ENCODE measurements at regions of chr19 and their contacts with region 1.

Region 1: GRCh38 chr19:18203863-18204393 is at the start of gene RAB3A:
- DNase-seq: peak; percentile 100
- ATAC-seq: peak; percentile 92
- H3K4me3 ChIP-seq: peak within 1 kb of the TSS; percentile 90
- H3K27ac ChIP-seq: peak within 1 kb of the TSS; percentile 10
- H3K4me1 ChIP-seq: peaks cover 16% of the 10 kb centered on the region
- H3K27me3 ChIP-seq: no peaks in the 10 kb centered on the region
- CTCF ChIP-seq: no peak
- total RNA-seq, gene RAB3A: 5.7 and 6.7 TPM in 2 replicates

Region 2: DNA sequence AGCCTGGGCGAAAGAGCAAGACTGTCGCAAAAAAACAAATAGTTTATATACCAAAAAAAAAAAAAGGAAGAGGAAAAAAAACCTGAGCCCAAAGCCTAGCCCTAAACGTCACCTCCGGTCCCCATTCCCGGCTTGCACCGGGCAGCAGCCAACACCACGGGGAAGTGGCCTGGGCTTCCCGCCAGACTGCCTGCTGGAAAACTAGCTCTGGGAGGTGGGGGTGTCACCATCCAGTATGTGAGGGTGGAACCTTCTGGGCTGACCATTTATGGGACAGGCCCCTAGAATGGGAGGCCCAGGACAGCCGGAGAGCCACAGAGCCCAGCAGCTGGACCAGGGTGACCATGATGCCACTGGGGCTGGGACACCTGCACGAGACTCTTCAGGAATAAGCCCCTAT is 154.5 kb before region 1 on chr19:
- CTCF ChIA-PET with region 1: no interaction called
- POLR2A ChIA-PET with region 1: interaction called, 27 read pairs
- intact Hi-C with region 1: no loop called
- DNase-seq: no peak
- ATAC-seq: no peak
- H3K4me3 ChIP-seq: no peak overlapping the region
- H3K27ac ChIP-seq: no peak overlapping the region
- H3K4me1 ChIP-seq: peaks cover 31% of the 10 kb centered on the region
- H3K27me3 ChIP-seq: no peaks in the 10 kb centered on the region
- CTCF ChIP-seq: no peak

Region 3: DNA sequence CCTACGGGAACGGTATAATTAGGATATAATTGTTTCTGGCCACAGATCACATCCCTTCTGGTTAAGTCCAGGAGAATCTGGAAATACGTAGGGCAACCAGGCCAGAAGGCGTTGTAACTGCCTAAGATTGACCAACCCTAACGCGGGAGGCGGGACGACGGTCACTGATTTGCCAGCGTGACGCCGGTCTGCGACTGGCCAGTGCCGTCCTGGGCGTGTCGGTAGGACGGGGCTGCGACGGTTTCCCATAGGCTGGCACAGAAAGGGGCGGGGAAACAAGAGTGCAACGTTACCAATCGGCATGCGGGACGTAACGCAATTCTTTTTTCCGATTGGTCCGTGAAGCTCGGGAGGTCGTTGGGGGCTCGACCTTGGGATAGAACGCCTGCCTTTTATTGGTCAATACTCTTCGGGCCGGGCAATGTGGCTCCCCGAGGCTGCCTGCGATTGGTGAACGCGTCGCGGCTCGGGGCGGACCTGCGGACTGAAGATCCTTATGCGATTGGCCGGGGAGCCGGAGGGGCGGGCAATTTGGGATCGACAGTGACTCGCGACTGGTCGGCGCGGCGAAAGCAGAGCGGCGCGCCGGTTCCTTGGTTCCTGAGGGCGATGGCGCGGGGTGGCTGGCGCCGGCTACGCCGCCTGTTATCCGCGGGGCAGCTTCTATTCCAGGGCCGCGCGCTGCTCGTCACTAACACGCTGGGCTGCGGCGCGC is 11.1 kb before region 1 on chr19 and contains the start of gene MPV17L2:
- CTCF ChIA-PET with region 1: interaction called, 4 read pairs
- POLR2A ChIA-PET with region 1: no interaction called
- intact Hi-C with region 1: loop called (anchors 1 kb)
- DNase-seq: peak; percentile 99
- ATAC-seq: peak; percentile 90
- H3K4me3 ChIP-seq: peak within 1 kb of the TSS; percentile 85
- H3K27ac ChIP-seq: peak within 1 kb of the TSS; percentile 26
- H3K4me1 ChIP-seq: peaks cover 13% of the 10 kb centered on the region
- H3K27me3 ChIP-seq: no peaks in the 10 kb centered on the region
- CTCF ChIP-seq: no peak
- total RNA-seq, gene MPV17L2: 34.2 and 44.7 TPM in 2 replicates

Region 4: DNA sequence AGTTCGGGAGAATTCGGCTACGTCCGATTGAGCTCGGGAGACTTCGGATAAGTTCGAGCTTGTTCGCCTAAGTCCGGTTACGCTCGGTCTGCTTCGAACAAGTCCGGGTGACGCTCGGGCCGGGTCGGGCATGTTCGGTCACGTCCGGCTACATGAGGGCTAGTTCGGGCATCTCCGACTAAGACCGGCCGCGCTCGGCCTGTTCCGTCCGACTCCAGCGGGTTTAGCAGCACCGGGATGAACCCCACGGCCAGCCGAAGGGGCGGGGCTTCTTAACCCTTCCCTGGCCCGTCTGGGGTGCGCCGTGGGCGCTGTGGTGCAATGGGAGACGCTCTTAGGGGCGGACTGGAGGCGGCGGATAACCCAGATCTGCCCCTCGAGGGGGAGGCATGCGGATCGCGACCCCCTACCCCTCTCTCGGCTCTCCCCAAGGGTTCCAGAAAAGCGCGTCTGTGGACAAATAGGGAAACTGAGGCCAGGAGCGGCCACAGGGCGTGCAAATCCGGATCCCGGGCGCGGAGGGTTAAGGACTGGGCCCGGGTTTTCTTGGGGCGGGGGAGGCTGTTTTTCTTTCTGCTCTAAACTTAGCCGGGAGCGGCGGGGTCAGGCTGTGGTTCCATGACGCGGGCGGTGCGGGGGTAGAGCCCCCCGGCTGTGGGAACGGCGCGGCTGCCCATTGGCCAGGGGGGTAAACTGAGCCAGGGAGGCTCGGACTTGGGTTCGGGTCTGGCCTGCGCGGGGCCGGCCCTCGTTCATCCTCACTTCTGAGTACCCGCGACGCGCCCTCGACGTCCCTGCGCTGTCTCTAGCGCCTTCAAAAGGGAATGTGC is 20.8 kb after region 1 on chr19:
- CTCF ChIA-PET with region 1: interaction called, 14 read pairs
- POLR2A ChIA-PET with region 1: no interaction called
- intact Hi-C with region 1: no loop called
- DNase-seq: peak; percentile 99
- ATAC-seq: peak; percentile 100
- H3K4me3 ChIP-seq: peak overlapping the region; percentile 61
- H3K27ac ChIP-seq: no peak overlapping the region
- H3K4me1 ChIP-seq: peaks cover 8% of the 10 kb centered on the region; the same call in 1 of the 2 replicates
- H3K27me3 ChIP-seq: peaks cover 9% of the 10 kb centered on the region
- CTCF ChIP-seq: no peak

Region 5: DNA sequence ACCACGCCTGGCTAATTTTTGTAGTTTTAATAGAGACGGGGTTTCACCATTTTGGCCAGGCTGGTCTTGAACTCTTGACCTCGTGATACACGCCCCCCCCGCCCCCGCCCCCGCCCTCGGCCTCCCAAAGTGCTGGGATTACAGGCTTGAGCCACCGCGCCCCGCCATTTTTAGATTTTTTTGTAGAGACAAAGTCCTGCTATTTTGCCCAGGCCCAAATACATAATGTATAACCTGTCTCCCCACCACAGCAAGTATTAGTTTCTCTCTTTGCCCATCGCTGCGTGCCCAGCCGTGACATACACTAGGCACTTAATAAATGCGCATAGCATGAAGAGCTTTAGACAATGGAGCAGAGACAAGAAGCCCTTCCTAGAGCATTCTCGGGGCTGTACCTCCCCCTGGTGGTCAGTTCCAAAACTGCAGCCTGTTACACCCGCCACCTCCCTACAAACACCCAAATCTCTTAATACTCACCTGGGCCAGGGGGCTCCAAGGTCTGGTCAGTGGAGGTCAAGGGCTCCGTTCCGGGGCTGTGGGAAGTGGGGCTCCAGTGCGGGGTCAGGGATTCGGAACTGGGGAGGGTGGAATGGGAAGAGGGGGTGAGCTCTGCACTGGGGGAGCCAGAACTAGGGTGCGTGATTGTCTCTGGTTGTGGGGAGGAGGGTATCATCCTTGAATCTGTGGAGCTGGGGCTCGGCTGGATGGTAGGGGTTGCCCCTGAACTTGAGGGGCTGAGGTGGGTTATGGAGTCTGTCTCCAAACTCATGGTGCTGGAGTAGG is 47.9 kb after region 1 on chr19:
- CTCF ChIA-PET with region 1: interaction called, 27 read pairs
- POLR2A ChIA-PET with region 1: interaction called, 3 read pairs
- intact Hi-C with region 1: loop called (anchors 1 kb)
- DNase-seq: peak; percentile 87
- ATAC-seq: peak; percentile 77
- H3K4me3 ChIP-seq: no peak overlapping the region
- H3K27ac ChIP-seq: no peak overlapping the region
- H3K4me1 ChIP-seq: peaks cover 12% of the 10 kb centered on the region
- H3K27me3 ChIP-seq: no peaks in the 10 kb centered on the region
- CTCF ChIP-seq: peak; percentile 94

Region 6: DNA sequence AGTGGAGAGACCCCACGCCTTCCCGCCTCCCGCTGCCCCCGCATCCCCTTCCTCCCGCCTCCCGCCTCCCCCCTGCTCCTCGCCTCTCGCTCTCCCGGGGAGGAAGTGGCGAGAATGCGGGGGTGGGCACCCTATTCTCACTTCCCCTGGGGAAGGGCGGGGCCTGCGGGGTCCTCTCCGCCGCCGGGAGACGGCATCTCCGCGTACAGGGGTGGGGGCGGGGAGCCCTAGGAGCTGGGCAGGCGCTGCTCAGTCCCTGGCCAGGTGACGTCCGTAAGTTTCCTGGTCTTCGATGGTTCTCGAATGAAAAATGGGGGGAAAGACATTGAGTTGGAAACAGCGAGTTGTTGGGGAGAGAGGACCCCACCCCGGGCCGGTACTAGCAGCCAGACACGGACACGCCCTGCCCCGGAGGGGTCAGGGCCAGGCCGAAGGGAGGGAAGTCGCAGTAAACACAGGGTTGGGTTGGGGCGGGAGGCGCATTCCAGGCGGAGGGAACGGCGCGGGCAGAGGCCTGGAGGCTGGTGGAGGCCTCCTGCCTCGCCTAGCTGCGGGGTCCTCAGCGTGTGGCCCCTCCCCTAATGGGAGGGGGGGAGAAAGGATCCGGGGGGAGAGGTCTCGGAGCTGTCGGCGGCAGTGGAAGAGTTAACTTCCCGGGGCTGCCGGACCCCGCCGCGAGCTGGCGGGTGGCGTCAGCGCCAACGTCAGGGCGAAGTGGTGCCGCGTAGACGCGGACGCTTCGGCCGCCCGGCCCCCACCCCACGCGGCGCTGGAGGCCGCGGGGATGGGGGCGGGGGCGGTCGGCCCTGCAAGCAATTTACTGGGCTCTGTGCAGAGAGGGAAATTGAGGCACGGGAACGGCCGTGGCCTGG is 87.9 kb after region 1 on chr19:
- CTCF ChIA-PET with region 1: no interaction called
- POLR2A ChIA-PET with region 1: no interaction called
- intact Hi-C with region 1: no loop called
- DNase-seq: peak; percentile 35
- ATAC-seq: peak; percentile 70
- H3K4me3 ChIP-seq: peak overlapping the region; percentile 70
- H3K27ac ChIP-seq: peak overlapping the region; percentile 23; the same call in 1 of the 2 replicates
- H3K4me1 ChIP-seq: peaks cover 17% of the 10 kb centered on the region
- H3K27me3 ChIP-seq: no peaks in the 10 kb centered on the region
- CTCF ChIP-seq: no peak

Region 7: DNA sequence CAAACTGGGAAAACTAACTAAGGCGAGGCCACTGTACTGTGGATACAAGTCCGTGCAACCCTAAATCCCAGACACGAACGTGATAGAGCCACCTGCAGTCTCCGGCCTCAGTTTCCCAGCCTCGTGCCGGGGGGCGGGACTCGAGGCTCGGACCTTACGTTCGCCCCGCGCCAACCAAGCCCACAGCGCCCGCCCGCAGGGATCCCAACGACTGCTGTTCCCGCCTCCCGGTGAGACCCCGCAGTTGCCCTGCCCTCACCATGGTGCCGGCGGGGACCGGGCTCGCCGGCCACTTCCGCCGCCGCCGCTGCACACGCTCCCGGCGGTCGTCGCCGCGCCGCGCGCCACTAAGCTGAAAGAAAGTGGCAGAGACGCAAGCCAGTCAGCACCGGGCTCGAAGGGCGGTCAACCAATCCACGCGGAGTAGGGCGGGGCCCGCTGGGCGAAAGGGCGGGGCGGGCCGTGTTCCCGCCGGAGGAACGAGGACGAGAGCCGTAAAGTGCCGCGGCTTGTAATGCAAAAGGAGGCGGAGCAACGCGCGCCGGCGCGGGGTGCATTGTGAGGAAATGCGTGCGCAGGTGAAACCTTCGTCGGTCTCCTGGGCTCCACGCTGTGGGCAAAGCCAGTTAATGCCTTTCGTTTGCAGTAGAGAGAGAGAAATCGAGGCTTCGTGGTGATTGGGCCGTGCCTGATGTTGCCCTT is 119.0 kb after region 1 on chr19 and contains the start of gene LSM4:
- CTCF ChIA-PET with region 1: no interaction called
- POLR2A ChIA-PET with region 1: no interaction called
- intact Hi-C with region 1: loop called (anchors 10 kb)
- DNase-seq: peak; percentile 99
- ATAC-seq: peak; percentile 97
- H3K4me3 ChIP-seq: peak within 1 kb of the TSS; percentile 97
- H3K27ac ChIP-seq: peak within 1 kb of the TSS; percentile 73
- H3K4me1 ChIP-seq: peaks cover 25% of the 10 kb centered on the region
- H3K27me3 ChIP-seq: no peaks in the 10 kb centered on the region
- CTCF ChIP-seq: no peak
- total RNA-seq, gene LSM4: 713 and 856 TPM in 2 replicates

Region 8: DNA sequence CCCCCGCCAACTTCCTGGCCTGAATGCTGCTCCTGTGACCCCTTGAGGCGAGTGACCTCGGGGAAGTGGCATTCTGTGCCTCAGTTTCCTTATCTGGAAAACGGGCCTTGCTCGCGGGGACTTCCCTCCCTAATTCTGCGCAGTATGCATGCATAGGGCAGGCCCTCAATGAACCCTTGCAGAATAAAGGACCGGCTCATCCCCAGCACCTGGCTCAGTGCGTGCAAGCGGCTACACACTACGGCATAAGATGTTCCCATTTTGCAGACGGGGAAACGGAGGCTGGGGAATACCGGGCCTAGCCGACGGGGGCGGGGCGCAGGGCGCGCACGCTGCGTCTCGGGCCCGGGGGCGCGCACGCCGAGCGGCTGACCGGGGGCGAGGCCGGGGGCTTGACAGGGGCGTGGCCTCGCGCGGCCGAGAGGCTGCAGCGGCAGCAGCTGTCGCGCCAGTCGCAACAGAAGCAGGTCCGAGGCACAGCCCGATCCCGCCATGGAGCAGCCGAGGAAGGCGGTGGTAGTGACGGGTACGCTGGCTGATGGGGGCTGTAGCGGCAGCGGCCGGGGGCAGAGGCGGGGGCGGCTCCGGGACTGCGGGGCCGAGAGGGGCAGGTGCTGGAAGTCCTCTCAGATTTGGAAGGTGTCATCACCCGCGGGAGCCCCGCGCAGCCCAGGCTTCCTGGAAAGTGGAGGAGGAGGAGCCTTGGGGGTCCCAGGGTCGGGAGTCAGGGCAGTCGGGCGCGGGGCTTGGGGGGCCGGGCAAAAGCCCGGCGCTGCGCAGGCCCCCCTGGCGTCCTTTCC is 136.5 kb after region 1 on chr19 and contains the start of gene PGPEP1:
- CTCF ChIA-PET with region 1: no interaction called
- POLR2A ChIA-PET with region 1: no interaction called
- intact Hi-C with region 1: no loop called
- DNase-seq: peak; percentile 67
- ATAC-seq: peak; percentile 76
- H3K4me3 ChIP-seq: peak within 1 kb of the TSS; percentile 85
- H3K27ac ChIP-seq: no peak within 1 kb of the TSS
- H3K4me1 ChIP-seq: peaks cover 24% of the 10 kb centered on the region
- H3K27me3 ChIP-seq: no peaks in the 10 kb centered on the region
- CTCF ChIP-seq: no peak
- total RNA-seq, gene PGPEP1: 9.6 and 11.4 TPM in 2 replicates

Region 9: GRCh38 chr19:18419195-18419698 is 215.3 kb after region 1 on chr19 and contains the start of gene SSBP4:
- CTCF ChIA-PET with region 1: no interaction called
- POLR2A ChIA-PET with region 1: no interaction called
- intact Hi-C with region 1: loop called (anchors 10 kb)
- DNase-seq: peak; percentile 85
- ATAC-seq: peak; percentile 22
- H3K4me3 ChIP-seq: peak within 1 kb of the TSS; percentile 91
- H3K27ac ChIP-seq: no peak within 1 kb of the TSS
- H3K4me1 ChIP-seq: peaks cover 37% of the 10 kb centered on the region
- H3K27me3 ChIP-seq: no peaks in the 10 kb centered on the region
- CTCF ChIP-seq: no peak
- total RNA-seq, gene SSBP4: 97.5 and 99.9 TPM in 2 replicates

Measured in PC-3 (cell line).